ENCODE measurements at regions of chr17 and their contacts with region 1.

Region 1: GRCh38 chr17:43701318-43701743 is 39.6 kb upstream of the MEOX1 start:
- DNase-seq: no peak
- H3K4me3 ChIP-seq: no peak overlapping the region
- H3K27ac ChIP-seq: no peak overlapping the region
- H3K4me1 ChIP-seq: no peaks in the 10 kb centered on the region
- H3K27me3 ChIP-seq: no peaks in the 10 kb centered on the region
- CTCF ChIP-seq: no peak
- POLR2A ChIP-seq: no peak

Region 2: GRCh38 chr17:43570518-43570928 is 130.8 kb before region 1 on chr17:
- CTCF ChIA-PET with region 1: no interaction called
- POLR2A ChIA-PET with region 1: no interaction called
- dilution Hi-C with region 1: no loop called
- intact Hi-C with region 1: no loop called
- DNase-seq: no peak
- H3K4me3 ChIP-seq: no peak overlapping the region
- H3K27ac ChIP-seq: no peak overlapping the region
- H3K4me1 ChIP-seq: no peaks in the 10 kb centered on the region
- H3K27me3 ChIP-seq: no peaks in the 10 kb centered on the region
- CTCF ChIP-seq: no peak
- POLR2A ChIP-seq: no peak

Region 3: DNA sequence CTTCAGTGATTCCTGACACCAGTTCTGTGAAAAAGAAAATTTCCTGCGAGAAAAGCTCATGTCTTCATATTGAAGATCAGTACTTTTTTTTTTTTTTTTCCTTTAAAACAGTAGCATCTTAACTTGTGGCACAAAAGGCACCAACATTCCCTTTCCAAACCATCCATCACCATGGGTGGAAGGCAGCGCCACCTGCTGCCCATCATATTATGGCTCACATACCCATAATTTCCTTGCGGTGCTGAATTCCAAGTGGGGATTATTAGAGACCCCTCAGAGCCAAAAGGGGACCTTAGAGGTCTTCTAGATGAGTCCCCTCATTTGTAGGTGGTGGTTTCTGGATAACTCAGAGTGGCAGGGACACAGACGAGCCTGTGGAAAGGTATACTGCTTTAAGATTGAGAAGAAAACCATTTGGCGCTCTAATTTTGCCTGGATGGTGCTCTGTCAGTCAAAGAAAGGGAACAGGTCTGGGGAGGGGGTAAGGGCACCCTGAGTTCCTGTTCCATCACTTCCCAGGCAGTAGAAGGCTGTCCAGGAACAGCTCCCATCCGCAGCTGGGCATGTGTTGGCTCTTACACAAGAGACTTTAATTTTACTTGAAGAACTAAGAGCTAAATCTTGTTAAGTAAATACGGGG is 65.2 kb after region 1 on chr17:
- CTCF ChIA-PET with region 1: interaction called, 414 read pairs
- POLR2A ChIA-PET with region 1: no interaction called
- dilution Hi-C with region 1: loop called (anchors 5 kb)
- intact Hi-C with region 1: no loop called
- DNase-seq: peak; percentile 56
- H3K4me3 ChIP-seq: no peak overlapping the region
- H3K27ac ChIP-seq: no peak overlapping the region
- H3K4me1 ChIP-seq: peaks cover 2% of the 10 kb centered on the region
- H3K27me3 ChIP-seq: no peaks in the 10 kb centered on the region
- CTCF ChIP-seq: peak; percentile 84 to 93
- POLR2A ChIP-seq: no peak

Region 4: DNA sequence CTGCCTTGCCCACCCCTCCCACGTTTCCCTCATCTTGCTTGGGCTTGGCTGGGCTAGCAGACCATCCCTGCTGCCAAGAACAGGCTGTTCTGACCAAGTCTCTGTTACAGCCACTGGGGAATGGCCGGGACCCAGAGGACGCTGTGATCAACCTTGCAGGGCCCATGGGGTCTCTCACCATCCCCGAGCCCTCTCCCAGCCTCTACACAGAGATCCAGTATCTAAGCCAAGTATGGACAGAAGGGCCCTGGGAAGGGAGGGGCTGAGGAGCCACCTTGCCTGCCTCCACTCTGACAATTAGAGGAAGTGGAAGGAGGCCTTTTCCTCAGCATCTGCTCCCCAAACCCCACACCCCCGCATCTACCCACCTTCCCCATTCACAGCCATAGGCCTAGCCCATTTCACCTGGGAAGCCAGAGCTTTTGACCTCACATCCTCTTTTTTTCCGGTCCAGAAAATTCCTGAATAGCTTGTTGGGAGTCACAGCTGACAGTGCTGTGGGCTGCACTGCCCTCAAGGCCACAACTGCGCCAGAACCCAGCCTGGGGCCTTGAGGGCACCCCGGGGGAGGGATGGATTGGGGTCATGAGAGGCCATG is 159.8 kb after region 1 on chr17:
- CTCF ChIA-PET with region 1: no interaction called
- POLR2A ChIA-PET with region 1: no interaction called
- dilution Hi-C with region 1: no loop called
- intact Hi-C with region 1: no loop called
- DNase-seq: no peak
- H3K4me3 ChIP-seq: no peak overlapping the region
- H3K27ac ChIP-seq: no peak overlapping the region
- H3K4me1 ChIP-seq: no peaks in the 10 kb centered on the region
- H3K27me3 ChIP-seq: peaks cover 8 to 13% of the 10 kb centered on the region in 2 experiments
- CTCF ChIP-seq: no peak
- POLR2A ChIP-seq: no peak